ENCODE measurements at regions of chr6 and their contacts with region 1.

Region 1: GRCh38 chr6:33570806-33571636 is 9.1 kb downstream of the BAK1 start:
- DNase-seq: peak; percentile 96
- ATAC-seq: peak; percentile 90
- H3K4me3 ChIP-seq: peak overlapping the region; percentile 67
- H3K27ac ChIP-seq: peak overlapping the region; percentile 98
- H3K4me1 ChIP-seq: peaks cover 18% of the 10 kb centered on the region
- H3K27me3 ChIP-seq: no peaks in the 10 kb centered on the region
- CTCF ChIP-seq: no peak
- EP300 ChIP-seq: peak; percentile 98 to 99
- POLR2A ChIP-seq: peak; percentile 93
- RAD21 ChIP-seq: no peak; the same call in 1 of the 2 replicates

Region 2: DNA sequence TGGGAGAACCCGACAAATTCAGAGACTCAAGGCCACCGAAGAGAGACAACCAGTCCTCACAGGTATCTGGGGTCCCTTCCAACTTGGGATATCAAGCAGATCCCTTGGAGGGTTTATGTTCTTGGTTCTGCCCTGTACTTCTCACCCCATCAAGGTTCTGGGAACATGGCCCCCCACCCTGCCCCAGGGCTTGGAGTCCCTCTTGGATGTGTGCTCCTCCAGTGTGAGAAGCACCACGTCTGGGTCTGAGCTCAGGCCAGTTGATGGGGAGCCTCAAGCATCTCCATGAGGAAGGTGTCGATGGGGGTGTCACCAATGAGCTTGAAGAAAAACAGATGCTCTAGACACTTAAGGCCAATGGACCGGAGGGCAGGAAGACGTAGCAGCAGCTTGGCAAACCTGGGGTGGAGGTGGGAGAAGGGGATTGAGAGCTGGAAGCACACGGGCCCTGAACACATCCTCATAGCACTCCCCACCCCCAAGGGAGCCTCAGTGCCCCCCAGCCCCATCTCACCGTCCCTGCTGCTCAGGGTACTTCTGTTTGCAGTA is 376.5 kb before region 1 on chr6:
- CTCF ChIA-PET with region 1: no interaction called
- POLR2A ChIA-PET with region 1: no interaction called
- RAD21 ChIA-PET with region 1: no interaction called
- SMC1A ChIA-PET with region 1: no interaction called
- in situ Hi-C with region 1: no loop called
- intact Hi-C with region 1: no loop called
- DNase-seq: no peak
- ATAC-seq: no peak
- H3K4me3 ChIP-seq: no peak overlapping the region
- H3K27ac ChIP-seq: no peak overlapping the region
- H3K4me1 ChIP-seq: 0 out of 2 replicates have a peak, but pooled peaks cover 10% of the 10 kb centered on the region
- H3K27me3 ChIP-seq: peaks cover 2 to 5% of the 10 kb centered on the region in 2 experiments
- CTCF ChIP-seq: no peak
- EP300 ChIP-seq: no peak
- POLR2A ChIP-seq: no peak
- RAD21 ChIP-seq: no peak

Region 3: DNA sequence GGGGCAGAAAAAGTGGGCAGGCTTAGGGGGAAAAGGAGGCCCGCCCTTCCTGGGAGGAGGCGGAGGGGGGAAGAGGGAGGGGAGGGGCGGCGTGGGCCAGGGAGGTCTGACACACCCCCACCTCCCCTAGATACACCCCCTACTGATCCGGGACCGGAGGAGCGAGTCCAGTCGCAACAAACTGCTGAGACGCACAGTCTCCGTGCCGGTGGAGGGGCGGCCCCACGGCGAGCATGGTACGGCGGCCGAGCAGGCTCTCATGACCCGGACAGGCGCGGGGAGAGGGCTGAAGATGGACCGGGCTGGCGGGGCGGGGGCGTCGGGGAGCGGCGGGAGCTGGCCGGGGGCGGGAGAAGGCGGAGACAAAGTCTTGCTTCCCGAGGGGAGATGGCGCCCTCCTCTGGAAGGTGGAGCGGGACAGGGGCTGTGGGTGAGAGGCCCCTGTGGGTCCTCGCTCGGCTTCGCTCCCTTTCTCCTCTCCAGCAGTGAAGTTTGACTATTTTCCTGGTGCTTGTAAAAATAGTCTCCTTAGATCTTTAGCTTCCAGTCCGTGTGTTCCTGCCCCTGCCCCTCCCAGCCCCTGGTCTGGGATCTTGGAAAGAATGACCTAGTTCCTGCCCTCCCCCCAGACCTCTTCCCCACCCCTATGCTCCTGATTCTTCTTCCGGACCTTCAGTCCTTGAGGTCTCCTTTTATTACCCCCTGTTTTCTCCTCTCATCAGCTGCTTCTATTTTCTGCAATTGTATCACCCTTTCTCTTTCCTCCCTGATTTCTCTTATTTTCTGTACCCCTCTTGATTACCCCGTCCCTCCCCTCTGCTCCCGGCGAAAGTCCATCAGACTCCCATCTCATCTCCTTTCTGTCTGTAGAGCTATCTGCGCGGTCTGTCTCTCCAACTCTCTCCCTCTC is 145.1 kb before region 1 on chr6:
- CTCF ChIA-PET with region 1: interaction called, 3 read pairs
- POLR2A ChIA-PET with region 1: interaction called, 9 read pairs
- RAD21 ChIA-PET with region 1: interaction called, 6 read pairs
- SMC1A ChIA-PET with region 1: interaction called, 3 read pairs
- in situ Hi-C with region 1: no loop called
- intact Hi-C with region 1: loop called (anchors 1 kb)
- DNase-seq: no peak
- ATAC-seq: peak; percentile 77
- H3K4me3 ChIP-seq: peak overlapping the region; percentile 66
- H3K27ac ChIP-seq: peak overlapping the region; percentile 86
- H3K4me1 ChIP-seq: peaks cover 36% of the 10 kb centered on the region
- H3K27me3 ChIP-seq: no peaks in the 10 kb centered on the region; a peak in 2 of 4 replicates
- CTCF ChIP-seq: peak; percentile 46 to 72 (median 69)
- EP300 ChIP-seq: no peak
- POLR2A ChIP-seq: peak; percentile 83
- RAD21 ChIP-seq: peak; percentile 54

Region 4: GRCh38 chr6:33508935-33509926 is 61.8 kb before region 1 on chr6:
- CTCF ChIA-PET with region 1: no interaction called
- POLR2A ChIA-PET with region 1: interaction called, 5 read pairs
- RAD21 ChIA-PET with region 1: interaction called, 3 read pairs
- SMC1A ChIA-PET with region 1: no interaction called
- in situ Hi-C with region 1: no loop called
- intact Hi-C with region 1: loop called (anchors 1 kb)
- DNase-seq: no peak
- ATAC-seq: peak; percentile 47
- H3K4me3 ChIP-seq: 0 out of 2 replicates have a peak overlapping the region, but pooled peaks have one; percentile 12
- H3K27ac ChIP-seq: peak overlapping the region; percentile 38
- H3K4me1 ChIP-seq: peaks cover 16% of the 10 kb centered on the region
- H3K27me3 ChIP-seq: no peaks in the 10 kb centered on the region
- CTCF ChIP-seq: no peak
- EP300 ChIP-seq: no peak
- POLR2A ChIP-seq: no peak
- RAD21 ChIP-seq: no peak

Region 5: GRCh38 chr6:33557376-33557775 is 13.6 kb before region 1 on chr6:
- CTCF ChIA-PET with region 1: no interaction called
- POLR2A ChIA-PET with region 1: interaction called, 3 read pairs
- RAD21 ChIA-PET with region 1: interaction called, 3 read pairs
- SMC1A ChIA-PET with region 1: interaction called, 8 read pairs
- in situ Hi-C with region 1: no loop called
- intact Hi-C with region 1: loop called (anchors 2 kb)
- DNase-seq: no peak
- ATAC-seq: no peak
- H3K4me3 ChIP-seq: no peak overlapping the region
- H3K27ac ChIP-seq: peak overlapping the region; percentile 43; the same call in 1 of the 2 replicates
- H3K4me1 ChIP-seq: peaks cover 3% of the 10 kb centered on the region
- H3K27me3 ChIP-seq: no peaks in the 10 kb centered on the region
- CTCF ChIP-seq: no peak
- EP300 ChIP-seq: no peak
- POLR2A ChIP-seq: no peak
- RAD21 ChIP-seq: no peak

Region 6: DNA sequence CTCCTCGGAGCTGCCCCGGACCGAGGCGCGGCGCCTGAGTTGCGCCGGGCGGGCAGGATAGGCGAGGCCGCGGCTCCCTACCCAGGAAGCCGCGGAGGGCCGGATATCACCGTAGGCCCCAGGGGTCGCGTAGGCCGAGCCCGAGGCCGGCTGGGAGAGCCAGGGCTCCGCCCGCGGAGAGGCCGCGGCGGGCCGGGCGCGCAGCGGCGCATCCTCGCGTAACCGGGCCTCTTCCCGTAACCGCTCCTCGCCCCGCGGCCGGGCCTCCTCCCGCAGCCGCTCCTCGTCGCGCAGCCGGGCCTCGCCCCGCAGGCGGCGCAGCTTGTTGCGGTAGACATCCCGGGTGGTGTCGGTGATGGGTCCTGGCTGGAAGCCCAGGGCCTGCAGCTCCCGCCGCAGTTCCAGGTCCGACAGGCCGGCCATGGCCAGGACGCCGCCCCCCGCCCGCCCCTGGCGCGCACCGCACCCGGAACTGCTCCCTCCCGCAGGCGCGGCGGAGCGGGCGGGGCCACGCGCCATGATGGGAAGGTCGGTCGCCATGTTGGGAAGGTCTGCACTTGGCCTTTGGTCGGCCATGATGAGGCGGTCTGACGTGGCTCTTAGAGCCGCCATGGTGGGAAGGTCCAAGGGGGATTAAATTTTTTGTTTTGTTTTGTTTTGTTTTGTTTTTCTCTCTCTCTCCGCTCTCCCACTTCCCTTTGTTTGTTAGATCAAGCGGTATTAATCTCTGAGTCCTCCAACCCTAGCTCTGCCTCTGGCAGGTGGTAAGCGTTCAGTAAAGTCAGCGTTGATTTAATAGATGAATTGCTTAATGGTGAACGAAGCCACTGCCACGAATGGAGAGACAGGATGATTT is 217.9 kb after region 1 on chr6 and contains the start of gene LEMD2:
- CTCF ChIA-PET with region 1: no interaction called
- POLR2A ChIA-PET with region 1: no interaction called
- RAD21 ChIA-PET with region 1: no interaction called
- SMC1A ChIA-PET with region 1: no interaction called
- in situ Hi-C with region 1: no loop called
- intact Hi-C with region 1: no loop called
- DNase-seq: peak; percentile 82
- ATAC-seq: peak; percentile 95
- H3K4me3 ChIP-seq: peak within 1 kb of the TSS; percentile 95
- H3K27ac ChIP-seq: peak within 1 kb of the TSS; percentile 87
- H3K4me1 ChIP-seq: peaks cover 6% of the 10 kb centered on the region
- H3K27me3 ChIP-seq: no peaks in the 10 kb centered on the region
- CTCF ChIP-seq: no peak
- EP300 ChIP-seq: no peak
- POLR2A ChIP-seq: peak; percentile 91
- RAD21 ChIP-seq: no peak
- polyA plus RNA-seq, gene LEMD2: 0.45 to 1.2 TPM

Measured in GM12878 (cell line).